Dendritic cell treated with granulocyte-macrophage colony-stimulating factor and Interleukin-4, amounts not matched to agents 40 ng/mL and 50 ng/mL, for 4 days (primary cell): ENCODE measurements at regions of chr11 and their contacts with region 1.

Region 1: GRCh38 chr11:17504330-17505107 is 27.9 kb upstream of the ABCC8 start:
- H3K4me3 Mint-ChIP-seq: no peak overlapping the region
- H3K27ac Mint-ChIP-seq: no peak overlapping the region
- H3K4me1 Mint-ChIP-seq: no peaks in the 10 kb centered on the region
- H3K27me3 Mint-ChIP-seq: peaks cover 5% of the 10 kb centered on the region

Region 2: DNA sequence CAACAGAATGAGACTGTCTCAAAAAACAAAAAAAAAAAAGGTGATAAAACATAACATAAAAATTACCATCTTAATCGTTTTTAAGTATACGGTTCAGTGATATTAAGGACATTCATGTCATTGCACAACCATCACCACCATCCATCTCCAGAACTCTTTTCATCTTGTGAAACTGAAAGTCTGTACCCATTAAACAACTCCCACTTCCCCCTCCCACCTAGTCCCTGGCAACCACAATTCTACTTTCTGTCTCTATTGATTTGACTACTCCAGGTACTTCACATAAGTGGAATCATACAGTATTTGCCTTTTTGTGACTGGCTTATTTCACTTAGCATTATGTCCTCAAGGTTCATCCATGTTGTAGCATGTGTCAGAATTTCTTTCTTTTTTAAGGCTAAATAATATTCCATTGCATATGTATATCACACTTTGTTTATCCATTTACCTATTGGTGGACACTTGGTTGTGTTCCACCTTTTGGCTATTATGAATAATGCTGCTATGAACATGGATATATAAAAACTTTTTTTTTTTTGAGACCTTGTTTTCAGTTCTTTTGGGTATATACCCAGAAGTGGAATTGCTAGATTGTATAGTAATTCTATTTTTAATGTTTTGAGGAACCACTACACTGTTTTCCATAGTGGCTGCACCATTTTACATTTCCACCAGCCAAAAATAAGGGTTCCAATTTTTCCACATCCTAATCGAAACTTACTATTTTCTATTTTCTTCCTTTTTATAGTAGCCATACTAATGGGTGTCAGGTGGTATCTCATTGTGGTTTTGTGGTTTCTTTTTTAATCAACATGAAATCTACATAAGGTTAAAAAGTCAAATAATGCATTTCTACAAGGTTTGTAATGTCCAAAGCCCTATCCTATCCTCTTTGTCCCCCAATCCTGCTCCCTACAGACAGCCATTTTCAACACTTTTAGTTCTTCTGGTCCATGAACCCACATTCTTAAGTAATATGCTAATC is 273.4 kb before region 1 on chr11:
- intact Hi-C with region 1: loop called (anchors 1 kb)
- H3K4me3 Mint-ChIP-seq: no peak overlapping the region
- H3K27ac Mint-ChIP-seq: no peak overlapping the region
- H3K4me1 Mint-ChIP-seq: peaks cover 14% of the 10 kb centered on the region
- H3K27me3 Mint-ChIP-seq: peaks cover 10% of the 10 kb centered on the region

Region 3: GRCh38 chr11:17384002-17384511 is 120.5 kb before region 1 on chr11:
- intact Hi-C with region 1: loop called (anchors 1 kb)
- H3K4me3 Mint-ChIP-seq: no peak overlapping the region
- H3K27ac Mint-ChIP-seq: no peak overlapping the region
- H3K4me1 Mint-ChIP-seq: peaks cover 56% of the 10 kb centered on the region
- H3K27me3 Mint-ChIP-seq: peaks cover 24% of the 10 kb centered on the region

Region 4: GRCh38 chr11:17489751-17490150 is 14.8 kb before region 1 on chr11:
- intact Hi-C with region 1: no loop called
- H3K4me3 Mint-ChIP-seq: no peak overlapping the region
- H3K27ac Mint-ChIP-seq: no peak overlapping the region
- H3K4me1 Mint-ChIP-seq: no peaks in the 10 kb centered on the region
- H3K27me3 Mint-ChIP-seq: peaks cover 2% of the 10 kb centered on the region

Region 5: GRCh38 chr11:17519061-17519885 is 14.8 kb after region 1 on chr11:
- intact Hi-C with region 1: no loop called
- H3K4me3 Mint-ChIP-seq: no peak overlapping the region
- H3K27ac Mint-ChIP-seq: no peak overlapping the region
- H3K4me1 Mint-ChIP-seq: no peaks in the 10 kb centered on the region
- H3K27me3 Mint-ChIP-seq: peaks cover 1% of the 10 kb centered on the region